ENCODE measurements at regions of chr13 and their contacts with region 1.

Region 1: DNA sequence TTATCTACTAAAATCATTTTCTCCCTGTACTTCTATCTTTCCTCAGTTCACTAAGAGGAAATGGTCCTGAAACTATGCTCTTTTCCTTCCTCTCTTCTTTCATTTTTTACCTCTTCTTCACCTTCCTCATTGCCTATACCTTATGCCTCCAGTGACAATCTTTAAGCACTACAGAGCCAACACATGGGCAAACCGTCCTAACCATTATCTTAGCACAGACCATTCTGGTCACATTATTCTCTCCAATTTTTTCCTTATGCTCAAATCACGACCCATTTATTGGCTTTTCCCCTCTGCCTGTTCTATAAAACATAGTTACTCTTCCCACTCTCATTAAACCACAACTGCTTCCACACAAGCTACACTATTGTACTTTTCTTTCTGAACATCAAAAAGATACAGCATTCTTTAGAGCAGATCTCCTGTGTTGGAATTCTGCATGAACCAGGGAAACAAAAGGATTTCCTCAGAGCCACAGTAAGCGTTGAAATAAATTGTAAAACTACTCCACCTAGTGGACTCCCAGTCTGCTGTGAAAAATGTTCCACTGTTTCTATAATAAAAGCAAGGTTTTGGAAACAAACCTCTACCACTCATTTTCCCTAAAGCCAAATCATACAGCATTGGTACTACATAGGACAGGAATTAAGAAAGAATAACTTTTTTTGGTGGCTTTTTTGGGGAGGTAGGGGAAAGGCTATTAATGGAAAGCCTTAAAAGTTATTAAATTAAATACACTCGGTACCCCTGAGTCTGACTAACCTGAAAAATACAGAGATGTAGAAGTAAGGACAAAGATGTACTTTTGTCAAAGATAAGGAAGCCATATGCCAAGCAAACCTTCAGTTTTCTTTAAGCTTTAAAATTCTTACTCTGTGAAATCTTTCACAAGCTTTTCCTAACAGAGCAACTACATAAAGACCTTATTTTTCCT is 19.5 kb downstream of the NUFIP1 start:
- DNase-seq: no peak

Region 2: DNA sequence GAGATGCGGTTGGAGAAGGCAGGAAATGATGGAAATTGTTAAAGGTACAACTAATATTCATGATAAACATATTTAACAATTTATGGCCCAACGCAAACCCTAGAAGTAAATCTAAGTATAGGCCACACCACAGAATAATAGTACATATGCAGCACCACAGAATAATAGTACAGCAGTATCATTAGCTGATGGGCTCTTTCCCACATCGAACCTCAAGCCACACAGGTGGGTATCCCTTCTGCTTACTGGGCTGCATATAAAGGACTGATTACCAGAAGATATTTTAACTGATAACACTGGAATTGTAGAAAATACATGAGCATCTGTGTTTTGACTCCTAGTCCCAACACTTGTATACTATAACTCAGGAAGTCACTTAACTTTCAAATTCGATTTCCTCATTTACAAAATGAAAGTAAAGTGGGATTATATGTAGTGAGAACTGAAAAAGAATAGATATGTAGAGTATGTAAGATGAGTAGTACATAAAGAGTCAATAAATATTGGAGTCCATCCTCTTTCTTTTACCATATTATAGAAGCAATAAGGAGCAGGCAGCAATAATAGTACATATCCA is 485.2 kb before region 1 on chr13:
- intact Hi-C with region 1: loop called (anchors 2 kb)
- DNase-seq: no peak

Region 3: GRCh38 chr13:44577236-44578066 is 392.4 kb before region 1 on chr13:
- intact Hi-C with region 1: loop called (anchors 5 kb)
- DNase-seq: peak; percentile 97

Region 4: DNA sequence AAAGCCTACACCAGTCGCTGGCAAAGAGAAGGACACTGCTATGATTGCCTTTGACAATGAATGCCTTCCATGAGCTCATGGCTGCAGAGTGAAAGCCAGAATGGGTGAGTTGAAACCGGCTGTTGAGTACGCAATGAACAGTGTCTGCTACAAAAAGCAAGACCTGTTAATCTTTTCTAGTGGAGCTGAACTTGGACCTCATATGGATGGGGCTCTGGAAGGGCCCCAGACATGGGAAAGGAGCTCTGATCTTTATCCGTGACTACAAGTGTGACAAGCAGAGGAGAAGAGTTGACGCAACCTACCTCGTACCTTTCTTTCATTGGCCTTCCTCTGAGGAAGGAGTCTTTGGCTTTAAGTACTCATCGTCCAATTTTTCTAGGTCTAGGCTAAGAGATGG is 326.6 kb before region 1 on chr13:
- intact Hi-C with region 1: no loop called
- DNase-seq: no peak

Region 5: GRCh38 chr13:44917589-44918325 is 52.1 kb before region 1 on chr13:
- intact Hi-C with region 1: loop called (anchors 5 kb)
- DNase-seq: peak; percentile 96

Region 6: DNA sequence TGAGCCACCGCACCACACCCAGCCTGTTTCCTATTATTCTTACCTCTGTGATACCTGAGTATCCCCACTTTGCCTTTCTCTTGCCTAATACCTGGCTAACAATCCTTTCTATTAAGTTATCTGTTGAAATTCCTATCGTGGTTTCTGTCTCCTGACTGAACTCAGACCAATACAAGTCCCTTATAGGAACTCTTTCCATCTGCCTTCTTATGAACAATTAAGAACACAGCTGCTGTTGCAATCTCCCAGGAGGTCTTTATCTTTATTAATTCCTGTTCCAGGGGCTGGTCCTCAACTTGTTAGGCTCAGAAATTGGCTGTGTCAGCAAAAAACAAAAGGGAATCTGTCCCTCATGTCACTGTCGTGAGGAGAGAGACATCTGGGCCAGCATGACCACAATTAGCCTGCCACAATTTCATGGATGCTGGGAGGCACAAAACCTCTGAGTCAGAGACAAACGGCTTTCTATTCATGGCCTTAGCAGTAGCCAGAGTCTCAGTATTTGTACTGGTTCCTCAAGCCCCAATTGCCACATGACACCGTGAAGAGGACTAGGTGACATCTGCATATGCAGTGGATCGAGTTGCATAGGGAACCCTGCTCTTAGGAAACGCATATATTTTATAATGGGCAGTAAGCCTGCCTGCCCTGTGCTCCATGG is 38.7 kb before region 1 on chr13:
- intact Hi-C with region 1: loop called (anchors 5 kb)
- DNase-seq: no peak

Region 7: GRCh38 chr13:45015300-45015699 is 45.5 kb after region 1 on chr13:
- intact Hi-C with region 1: no loop called
- DNase-seq: no peak

Region 8: DNA sequence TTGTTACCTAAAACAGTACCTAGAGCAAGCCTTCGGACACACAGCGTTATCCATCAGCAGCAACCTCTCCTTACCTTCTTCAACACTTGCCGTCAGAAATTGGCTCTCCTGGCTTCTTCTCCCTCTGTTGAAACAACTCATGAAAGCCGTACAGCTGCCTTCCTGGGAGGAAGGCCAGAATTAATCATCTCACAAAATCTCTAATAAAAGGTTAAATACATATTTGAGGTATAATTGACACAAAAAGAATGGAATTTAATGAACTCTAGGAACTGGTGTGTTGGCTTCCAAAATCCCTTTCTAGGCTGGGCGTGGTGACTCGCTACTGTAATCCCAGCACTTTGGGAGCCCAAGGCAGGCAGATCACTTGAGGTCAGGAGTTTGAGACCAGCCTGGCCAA is 113.1 kb after region 1 on chr13:
- intact Hi-C with region 1: no loop called
- DNase-seq: no peak

Measured in cardiac septum (tissue), 1 donor.